Naive thymus-derived CD8-positive, alpha-beta T cell (primary cell): ENCODE measurements at regions of chr6 and their contacts with region 1.

Region 1: DNA sequence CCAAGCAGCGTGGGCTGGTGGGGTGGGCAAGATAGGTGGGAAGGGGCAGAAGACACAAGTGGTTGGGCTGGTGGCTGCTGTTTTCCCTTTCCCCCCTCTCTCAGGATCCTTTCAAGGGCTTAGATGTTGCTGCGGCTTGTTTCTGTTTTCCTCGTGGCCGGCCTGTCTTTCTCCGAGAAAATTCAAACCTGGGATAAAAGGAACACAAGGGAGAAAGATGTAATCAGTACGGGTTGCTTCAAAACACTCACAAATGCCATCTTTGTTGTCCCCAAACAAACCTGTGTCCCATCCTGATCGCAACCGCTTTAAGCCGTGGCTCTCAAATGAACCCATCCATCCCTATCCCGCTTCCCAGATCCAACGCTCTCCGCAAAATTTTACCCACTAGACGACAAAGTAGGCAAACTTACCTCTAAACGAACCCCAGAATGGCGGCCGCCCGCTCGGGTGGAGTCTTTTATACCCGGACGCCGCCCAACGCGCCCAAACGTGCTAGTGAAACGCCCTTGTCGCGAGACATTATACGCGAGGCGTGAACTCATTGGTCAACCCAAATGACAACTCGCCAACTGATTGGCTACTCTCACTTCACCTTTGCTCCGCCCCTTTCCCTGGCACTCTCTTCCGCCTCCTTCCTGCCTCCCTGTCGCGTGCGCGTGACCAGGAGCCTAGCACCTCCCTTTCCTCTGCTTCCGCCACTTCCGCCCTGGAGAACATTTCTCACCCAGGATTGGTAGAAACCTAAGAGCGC is at the start of gene PPP1R10:
- DNase-seq: peak; percentile 83 to 100 (median 99)
- ATAC-seq: peak; percentile 70 to 77
- H3K4me3 Mint-ChIP-seq: peak within 1 kb of the TSS; percentile 92 to 100 (median 99)
- H3K27ac Mint-ChIP-seq: peak within 1 kb of the TSS; percentile 99 to 100 (median 100)
- H3K4me1 Mint-ChIP-seq: peaks cover 18 to 61% (median 48%) of the 10 kb centered on the region in 4 donors
- H3K27me3 Mint-ChIP-seq: peaks cover 0 to 8% (median 0%) of the 10 kb centered on the region in 5 donors
- polyA plus RNA-seq, gene PPP1R10: 16.9 to 20.2 (median 19.8) TPM

Region 2: DNA sequence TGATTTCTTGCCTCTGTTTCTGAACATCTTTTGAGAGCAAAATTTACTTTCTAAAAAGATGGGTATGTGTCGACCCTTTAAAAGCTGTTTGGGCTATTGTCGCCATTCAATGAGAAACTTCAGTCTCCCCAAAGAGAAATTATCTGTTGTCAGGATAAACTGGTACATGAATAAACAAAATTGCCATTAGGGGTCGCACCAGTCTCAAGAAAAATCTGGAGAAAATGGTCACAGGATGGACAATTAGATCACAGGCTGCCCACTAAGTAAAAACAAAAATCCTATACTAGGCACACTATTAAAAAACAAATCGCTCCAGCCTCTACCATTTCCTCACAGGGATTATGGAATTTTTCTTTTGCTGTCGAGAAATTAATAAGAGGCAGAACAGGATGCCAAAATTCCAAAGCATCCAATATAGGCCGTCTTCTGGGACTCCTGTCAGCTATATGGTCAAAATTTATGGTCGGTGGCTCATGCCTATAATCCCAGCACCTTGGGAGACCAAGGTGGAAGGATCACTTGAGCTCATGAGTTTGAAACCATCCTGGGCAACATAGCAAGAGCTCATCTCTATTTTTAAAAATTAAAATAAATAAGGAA is 133.2 kb before region 1 on chr6:
- POLR2A ChIA-PET with region 1: interaction called, 11 read pairs
- DNase-seq: peak in 4 of 10 donors; percentile 38 to 62 (median 54)
- ATAC-seq: no peak
- H3K4me3 Mint-ChIP-seq: no peak overlapping the region
- H3K27ac Mint-ChIP-seq: peak overlapping the region in 2 of 10 donors; percentile 19 to 23
- H3K4me1 Mint-ChIP-seq: peaks cover 21 to 38% (median 35%) of the 10 kb centered on the region in 4 donors
- H3K27me3 Mint-ChIP-seq: peaks cover 16 to 34% (median 28%) of the 10 kb centered on the region in 5 donors

Region 3: GRCh38 chr6:30541515-30542403 is 75.2 kb before region 1 on chr6:
- POLR2A ChIA-PET with region 1: interaction called, 59 read pairs
- DNase-seq: peak; percentile 64 to 90 (median 79)
- ATAC-seq: peak; percentile 72 to 78
- H3K4me3 Mint-ChIP-seq: peak overlapping the region; percentile 78 to 95 (median 90)
- H3K27ac Mint-ChIP-seq: peak overlapping the region; percentile 82 to 97 (median 93)
- H3K4me1 Mint-ChIP-seq: peaks cover 27 to 36% (median 32%) of the 10 kb centered on the region in 4 donors
- H3K27me3 Mint-ChIP-seq: no peaks in the 10 kb centered on the region

Region 4: GRCh38 chr6:30600451-30600961 is 16.5 kb before region 1 on chr6:
- POLR2A ChIA-PET with region 1: interaction called, 70 read pairs
- DNase-seq: no peak
- ATAC-seq: no peak
- H3K4me3 Mint-ChIP-seq: no peak overlapping the region
- H3K27ac Mint-ChIP-seq: peak overlapping the region; percentile 52 to 91 (median 76)
- H3K4me1 Mint-ChIP-seq: peaks cover 20 to 40% (median 33%) of the 10 kb centered on the region in 4 donors
- H3K27me3 Mint-ChIP-seq: no peaks in the 10 kb centered on the region

Region 5: GRCh38 chr6:30672445-30673253 is 55.7 kb after region 1 on chr6 and contains the start of gene DHX16:
- POLR2A ChIA-PET with region 1: interaction called, 24 read pairs
- DNase-seq: peak; percentile 76 to 94 (median 86)
- ATAC-seq: peak; percentile 80 to 85
- H3K4me3 Mint-ChIP-seq: peak within 1 kb of the TSS; percentile 76 to 95 (median 90)
- H3K27ac Mint-ChIP-seq: peak within 1 kb of the TSS; percentile 74 to 96 (median 90)
- H3K4me1 Mint-ChIP-seq: peaks cover 23 to 46% (median 41%) of the 10 kb centered on the region in 4 donors
- H3K27me3 Mint-ChIP-seq: no peaks in the 10 kb centered on the region
- polyA plus RNA-seq, gene DHX16: 17.7 to 31.2 (median 18.7) TPM

Region 6: DNA sequence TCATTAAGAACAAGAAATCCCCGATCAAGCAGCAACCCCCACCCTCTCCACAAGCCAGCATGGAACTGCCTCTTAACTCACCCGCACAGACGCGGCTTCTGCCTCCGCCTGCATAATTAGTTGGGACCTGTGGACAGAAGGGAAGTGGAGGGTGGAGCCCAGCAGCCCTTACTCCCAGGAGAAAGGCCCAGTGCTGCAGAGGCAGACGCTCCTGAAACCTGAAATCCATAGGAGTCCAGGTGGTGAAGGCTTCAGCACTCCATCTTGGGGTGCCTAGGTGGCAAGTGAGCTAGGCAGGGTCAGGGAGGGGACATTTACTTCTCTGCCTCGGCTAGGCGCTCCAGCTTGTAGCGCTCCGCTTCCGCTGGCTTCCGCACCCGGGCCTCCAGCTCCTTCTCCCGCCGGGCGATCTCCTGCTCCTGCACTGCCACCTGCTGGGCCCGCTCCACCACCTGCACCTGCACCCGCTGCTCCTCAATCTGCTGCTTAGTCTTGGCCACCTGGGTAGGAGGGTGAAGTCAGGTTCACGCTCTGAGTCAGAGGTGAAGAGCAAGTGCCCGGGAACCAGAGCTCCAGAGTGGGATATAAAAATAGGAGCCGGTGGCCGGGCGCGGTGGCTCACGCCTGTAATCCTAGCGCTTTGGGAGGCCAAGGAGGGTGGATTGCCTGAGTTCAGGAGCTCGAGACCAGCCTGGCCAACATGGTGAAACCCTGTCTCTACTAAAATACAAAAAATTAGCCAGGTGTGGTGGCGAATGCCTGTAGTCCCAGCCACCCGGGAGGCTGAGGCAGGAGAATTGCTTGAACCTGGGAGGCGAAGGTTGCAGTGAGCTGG is 113.8 kb after region 1 on chr6:
- POLR2A ChIA-PET with region 1: interaction called, 16 read pairs
- DNase-seq: peak; percentile 66 to 90 (median 80)
- ATAC-seq: peak; percentile 98 to 99
- H3K4me3 Mint-ChIP-seq: peak overlapping the region; percentile 14 to 77 (median 51)
- H3K27ac Mint-ChIP-seq: peak overlapping the region; percentile 47 to 81 (median 70)
- H3K4me1 Mint-ChIP-seq: peaks cover 21 to 47% (median 31%) of the 10 kb centered on the region in 4 donors
- H3K27me3 Mint-ChIP-seq: no peaks in the 10 kb centered on the region

Region 7: GRCh38 chr6:30883685-30884520 is 266.9 kb after region 1 on chr6 and contains the start of gene DDR1:
- POLR2A ChIA-PET with region 1: no interaction called
- DNase-seq: peak in 8 of 10 donors; percentile 23 to 71 (median 36)
- ATAC-seq: peak; percentile 62 to 65
- H3K4me3 Mint-ChIP-seq: peak within 1 kb of the TSS; percentile 70 to 94 (median 86)
- H3K27ac Mint-ChIP-seq: peak within 1 kb of the TSS; percentile 58 to 93 (median 88)
- H3K4me1 Mint-ChIP-seq: peaks cover 26 to 44% (median 34%) of the 10 kb centered on the region in 4 donors
- H3K27me3 Mint-ChIP-seq: no peaks in the 10 kb centered on the region
- polyA plus RNA-seq, gene DDR1: 0.57 to 5.4 (median 1.5) TPM